ENCODE measurements at regions of chr5 and their contacts with region 1.

Region 1: GRCh38 chr5:34474573-34475021 is 181.5 kb upstream of the RAI14 start:
- DNase-seq: peak; percentile 67
- H3K4me3 Mint-ChIP-seq: no peak overlapping the region
- H3K27ac Mint-ChIP-seq: no peak overlapping the region
- H3K4me1 Mint-ChIP-seq: no peaks in the 10 kb centered on the region
- H3K27me3 Mint-ChIP-seq: peaks cover 14% of the 10 kb centered on the region

Region 2: GRCh38 chr5:34598177-34598794 is 123.7 kb after region 1 on chr5:
- intact Hi-C with region 1: no loop called
- DNase-seq: no peak
- H3K4me3 Mint-ChIP-seq: no peak overlapping the region
- H3K27ac Mint-ChIP-seq: no peak overlapping the region
- H3K4me1 Mint-ChIP-seq: no peaks in the 10 kb centered on the region
- H3K27me3 Mint-ChIP-seq: no peaks in the 10 kb centered on the region

Region 3: GRCh38 chr5:34898258-34898895 is 423.8 kb after region 1 on chr5:
- intact Hi-C with region 1: loop called (anchors 1 kb)
- DNase-seq: peak; percentile 86
- H3K4me3 Mint-ChIP-seq: no peak overlapping the region
- H3K27ac Mint-ChIP-seq: no peak overlapping the region
- H3K4me1 Mint-ChIP-seq: no peaks in the 10 kb centered on the region
- H3K27me3 Mint-ChIP-seq: no peaks in the 10 kb centered on the region

Measured in activated CD4-positive, alpha-beta T cell treated with anti-CD3 and anti-CD28 coated beads, Interleukin-2, amount 10 ng/mL, durations not matched to agents 24 days and 14 days (primary cell).